ENCODE measurements at regions of chr3 and their contacts with region 1.

Region 1: GRCh38 chr3:102089904-102090492 is 240.7 kb downstream of the NFKBIZ start:
- DNase-seq: no peak
- H3K4me3 Mint-ChIP-seq: no peak overlapping the region
- H3K27ac Mint-ChIP-seq: no peak overlapping the region
- H3K4me1 Mint-ChIP-seq: peaks cover 44% of the 10 kb centered on the region
- H3K27me3 Mint-ChIP-seq: no peaks in the 10 kb centered on the region

Region 2: GRCh38 chr3:101809178-101810021 is 280.6 kb before region 1 on chr3:
- CTCF ChIA-PET with region 1: interaction called, 7 read pairs
- intact Hi-C with region 1: loop called (anchors 1 kb)
- DNase-seq: peak; percentile 49
- H3K4me3 Mint-ChIP-seq: no peak overlapping the region
- H3K27ac Mint-ChIP-seq: no peak overlapping the region
- H3K4me1 Mint-ChIP-seq: peaks cover 46% of the 10 kb centered on the region
- H3K27me3 Mint-ChIP-seq: no peaks in the 10 kb centered on the region

Region 3: GRCh38 chr3:101936419-101937356 is 153.3 kb before region 1 on chr3:
- CTCF ChIA-PET with region 1: no interaction called
- intact Hi-C with region 1: loop called (anchors 1 kb)
- DNase-seq: peak; percentile 33
- H3K4me3 Mint-ChIP-seq: peak overlapping the region; percentile 0
- H3K27ac Mint-ChIP-seq: peak overlapping the region; percentile 57
- H3K4me1 Mint-ChIP-seq: peaks cover 32% of the 10 kb centered on the region
- H3K27me3 Mint-ChIP-seq: peaks cover 2% of the 10 kb centered on the region

Region 4: DNA sequence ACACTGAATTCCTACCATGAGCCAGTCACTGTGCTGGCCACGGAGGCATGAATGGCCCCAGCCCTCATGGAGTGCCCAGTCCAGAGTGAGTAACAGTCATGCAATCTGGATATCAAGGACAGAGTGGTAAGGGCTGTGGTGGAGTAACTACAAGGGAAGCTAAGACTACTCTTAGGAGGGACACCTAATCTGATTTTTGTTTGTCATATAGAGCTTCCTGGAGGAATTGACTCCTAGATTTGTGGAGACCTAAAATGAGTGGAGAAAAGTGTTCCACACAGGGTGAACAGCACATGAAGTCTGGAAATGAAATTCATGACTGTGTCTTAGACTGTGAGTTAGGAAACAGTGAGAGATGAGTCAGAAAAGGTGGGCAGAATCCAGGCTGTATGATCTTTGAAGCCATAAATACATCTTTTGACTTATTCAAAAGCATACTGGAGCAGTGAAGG is 20.8 kb before region 1 on chr3:
- CTCF ChIA-PET with region 1: no interaction called
- intact Hi-C with region 1: loop called (anchors 1 kb)
- DNase-seq: peak; percentile 12
- H3K4me3 Mint-ChIP-seq: no peak overlapping the region
- H3K27ac Mint-ChIP-seq: no peak overlapping the region
- H3K4me1 Mint-ChIP-seq: peaks cover 25% of the 10 kb centered on the region
- H3K27me3 Mint-ChIP-seq: no peaks in the 10 kb centered on the region

Region 5: GRCh38 chr3:102129760-102130608 is 40.0 kb after region 1 on chr3:
- CTCF ChIA-PET with region 1: no interaction called
- intact Hi-C with region 1: loop called (anchors 1 kb)
- DNase-seq: peak; percentile 29
- H3K4me3 Mint-ChIP-seq: no peak overlapping the region
- H3K27ac Mint-ChIP-seq: no peak overlapping the region
- H3K4me1 Mint-ChIP-seq: peaks cover 24% of the 10 kb centered on the region
- H3K27me3 Mint-ChIP-seq: no peaks in the 10 kb centered on the region